ENCODE measurements at regions of chr1 and their contacts with region 1.

Region 1: GRCh38 chr1:167059045-167059808 is 30.9 kb downstream of the GPA33 start:
- DNase-seq: peak; percentile 38 to 75 (median 57)
- ATAC-seq: peak; percentile 78
- H3K4me3 ChIP-seq: no peak overlapping the region
- H3K4me3 Mint-ChIP-seq: no peak overlapping the region
- H3K27ac ChIP-seq: no peak overlapping the region
- H3K27ac Mint-ChIP-seq: peak overlapping the region in 6 of 9 donors; percentile 5 to 55 (median 25)
- H3K4me1 ChIP-seq: peaks cover 0 to 4% of the 10 kb centered on the region in 2 donors
- H3K4me1 Mint-ChIP-seq: peaks cover 0 to 8% (median 6%) of the 10 kb centered on the region in 7 donors
- H3K27me3 ChIP-seq: no peaks in the 10 kb centered on the region
- H3K27me3 Mint-ChIP-seq: no peaks in the 10 kb centered on the region

Region 2: DNA sequence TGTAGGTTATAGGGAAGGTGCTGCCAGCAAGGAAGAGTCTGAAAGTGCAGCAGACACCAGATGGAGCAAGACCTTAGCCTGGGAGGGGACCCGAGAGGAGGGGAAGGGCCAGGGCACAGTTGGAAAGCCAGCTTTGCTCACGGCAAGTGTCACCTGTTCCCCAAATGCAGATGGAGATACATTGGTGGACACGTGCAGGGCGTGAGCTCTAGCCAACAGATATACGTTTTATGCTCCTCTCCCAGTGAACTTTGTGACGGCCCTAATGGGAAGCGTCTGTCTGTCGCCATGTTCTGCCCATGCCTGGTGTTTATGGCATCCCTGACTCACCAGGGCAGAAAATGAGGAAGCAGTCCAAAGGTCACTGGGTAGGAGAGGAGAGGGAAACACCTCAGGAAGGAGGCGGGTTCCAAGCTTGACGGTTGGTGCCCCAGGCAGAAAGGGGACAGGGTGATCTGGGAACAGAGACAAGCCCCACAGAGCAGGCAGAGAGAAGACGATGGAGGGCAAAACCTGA is 23.3 kb after region 1 on chr1:
- CTCF ChIA-PET with region 1: interaction called, 14 read pairs
- POLR2A ChIA-PET with region 1: no interaction called
- intact Hi-C with region 1: no loop called
- DNase-seq: no peak
- ATAC-seq: peak; percentile 61
- H3K4me3 ChIP-seq: no peak overlapping the region
- H3K4me3 Mint-ChIP-seq: no peak overlapping the region
- H3K27ac ChIP-seq: no peak overlapping the region
- H3K27ac Mint-ChIP-seq: peak overlapping the region in 2 of 9 donors; percentile 21 to 68
- H3K4me1 ChIP-seq: peaks cover 0 to 3% of the 10 kb centered on the region in 2 donors
- H3K4me1 Mint-ChIP-seq: peaks cover 0 to 39% (median 11%) of the 10 kb centered on the region in 7 donors
- H3K27me3 ChIP-seq: no peaks in the 10 kb centered on the region
- H3K27me3 Mint-ChIP-seq: peaks cover 0 to 12% (median 0%) of the 10 kb centered on the region in 5 donors

Region 3: GRCh38 chr1:167128261-167129227 is 69.3 kb after region 1 on chr1:
- CTCF ChIA-PET with region 1: interaction called, 67 read pairs
- POLR2A ChIA-PET with region 1: interaction called, 3 read pairs
- intact Hi-C with region 1: no loop called
- DNase-seq: peak in 3 of 9 donors; percentile 19 to 29 (median 20)
- ATAC-seq: no peak
- H3K4me3 ChIP-seq: no peak overlapping the region
- H3K4me3 Mint-ChIP-seq: no peak overlapping the region
- H3K27ac ChIP-seq: no peak overlapping the region
- H3K27ac Mint-ChIP-seq: peak overlapping the region in 1 of 9 donors; percentile 1
- H3K4me1 ChIP-seq: no peaks in the 10 kb centered on the region
- H3K4me1 Mint-ChIP-seq: peaks cover 0 to 4% (median 0%) of the 10 kb centered on the region in 7 donors
- H3K27me3 ChIP-seq: no peaks in the 10 kb centered on the region
- H3K27me3 Mint-ChIP-seq: peaks cover 12 to 43% (median 24%) of the 10 kb centered on the region in 5 donors